ENCODE measurements at regions of chr6 and their contacts with region 1.

Region 1: DNA sequence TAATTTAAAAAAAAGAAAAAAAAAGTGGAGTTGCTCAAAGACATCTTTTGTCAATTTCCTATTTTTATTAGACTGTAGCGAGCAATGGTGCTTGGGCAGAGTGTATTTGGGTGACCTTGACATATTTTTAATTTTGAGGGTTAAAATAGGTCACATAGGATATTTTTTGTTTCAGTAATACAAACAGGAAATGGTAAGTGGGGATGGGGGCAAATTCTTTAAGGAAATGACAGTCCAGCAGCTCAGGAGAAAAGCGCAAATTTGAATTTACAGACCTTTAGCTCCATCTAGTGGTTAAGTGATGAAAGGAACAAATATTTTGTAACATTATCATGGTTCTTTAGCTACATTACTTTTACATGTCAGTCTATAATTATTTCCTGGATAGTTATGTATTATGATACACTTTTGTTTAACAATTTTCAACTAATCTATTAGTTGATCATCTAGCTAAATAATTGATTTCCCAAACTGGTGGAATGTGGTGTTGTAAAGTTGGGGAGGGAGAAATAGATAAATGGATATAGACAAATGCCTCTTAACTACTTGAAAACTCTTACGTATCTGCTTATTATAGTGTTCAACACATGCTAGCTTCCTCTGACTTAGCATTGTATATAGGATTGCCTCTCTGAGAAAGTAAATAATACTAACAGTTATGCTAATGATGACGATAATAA is 10.0 kb downstream of the CITED2 start:
- DNase-seq: peak in 2 of 9 experiments; percentile 64 to 74
- ATAC-seq: peak; percentile 63
- H3K4me3 ChIP-seq: no peak overlapping the region
- H3K4me3 Mint-ChIP-seq: no peak overlapping the region
- H3K27ac ChIP-seq: no peak overlapping the region
- H3K27ac Mint-ChIP-seq: no peak overlapping the region
- H3K4me1 ChIP-seq: peaks cover 4% of the 10 kb centered on the region
- H3K4me1 Mint-ChIP-seq: peaks cover 46% of the 10 kb centered on the region
- H3K27me3 ChIP-seq: no peaks in the 10 kb centered on the region
- H3K27me3 Mint-ChIP-seq: no peaks in the 10 kb centered on the region
- CTCF ChIP-seq: peak; percentile 97

Region 2: DNA sequence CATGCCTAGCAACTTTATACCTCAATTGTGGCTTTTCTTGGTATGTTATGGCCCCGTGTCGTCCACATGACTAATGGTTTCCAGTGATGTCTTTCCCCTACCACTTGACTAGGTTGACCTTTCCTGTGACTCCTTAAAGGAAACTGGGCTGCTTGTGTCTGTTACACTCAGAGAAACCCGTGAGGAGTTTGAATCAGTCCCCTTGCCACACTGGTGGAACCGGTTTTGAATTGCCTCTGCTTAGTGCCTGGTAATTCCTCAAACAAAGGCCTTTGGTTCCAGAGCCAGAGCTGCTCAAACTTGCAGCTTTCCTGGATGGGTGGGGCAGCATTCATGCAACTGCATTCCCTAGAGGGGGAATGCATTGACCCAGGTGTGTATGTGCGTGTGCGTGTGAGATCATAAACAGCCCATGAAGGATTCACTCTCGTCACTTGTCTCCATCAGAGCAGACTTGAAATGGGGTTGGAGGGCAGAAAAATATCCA is 546.6 kb before region 1 on chr6:
- CTCF ChIA-PET with region 1: interaction called, 19 read pairs
- POLR2A ChIA-PET with region 1: interaction called, 3 read pairs
- intact Hi-C with region 1: loop called in 1 of 2 experiments (anchors 2 kb)
- DNase-seq: no peak
- ATAC-seq: no peak
- H3K4me3 ChIP-seq: no peak overlapping the region
- H3K4me3 Mint-ChIP-seq: no peak overlapping the region
- H3K27ac ChIP-seq: no peak overlapping the region
- H3K27ac Mint-ChIP-seq: no peak overlapping the region
- H3K4me1 ChIP-seq: no peaks in the 10 kb centered on the region
- H3K4me1 Mint-ChIP-seq: no peaks in the 10 kb centered on the region
- H3K27me3 ChIP-seq: no peaks in the 10 kb centered on the region
- H3K27me3 Mint-ChIP-seq: no peaks in the 10 kb centered on the region
- CTCF ChIP-seq: no peak

Region 3: DNA sequence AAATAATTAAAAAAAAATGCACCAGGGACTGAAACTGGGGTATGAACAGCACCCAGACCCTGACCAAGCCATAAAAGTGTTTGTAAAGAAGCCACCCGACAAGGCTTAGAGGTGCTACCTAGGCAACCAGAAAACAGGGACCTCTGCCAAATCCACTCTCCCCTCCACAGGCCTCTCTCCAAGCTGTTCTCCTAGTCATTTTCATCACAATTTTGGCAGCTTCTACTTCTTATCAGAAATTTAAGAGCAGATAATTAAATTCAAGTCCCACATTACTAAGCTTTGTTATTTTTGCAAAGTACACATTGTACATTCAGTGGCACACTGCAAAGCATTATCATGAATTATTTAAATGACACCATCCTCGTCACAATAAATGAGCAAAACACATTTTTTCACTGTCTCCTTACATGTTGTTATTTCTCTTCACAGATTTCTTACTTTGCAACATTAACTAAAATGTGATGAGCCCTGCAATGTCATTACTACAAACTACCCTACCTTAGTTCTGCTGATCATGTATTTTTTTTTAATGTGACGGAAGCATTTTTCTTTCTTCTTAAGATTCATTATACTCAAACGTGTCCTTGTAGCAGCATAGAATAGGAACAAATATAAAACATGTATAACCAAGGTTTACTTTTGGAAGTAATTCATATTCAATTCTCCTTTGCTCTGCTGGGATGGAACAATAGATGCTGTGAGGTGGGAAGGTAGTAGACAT is 530.5 kb before region 1 on chr6:
- CTCF ChIA-PET with region 1: no interaction called
- POLR2A ChIA-PET with region 1: no interaction called
- intact Hi-C with region 1: no loop called
- DNase-seq: no peak
- ATAC-seq: no peak
- H3K4me3 ChIP-seq: no peak overlapping the region
- H3K4me3 Mint-ChIP-seq: no peak overlapping the region
- H3K27ac ChIP-seq: no peak overlapping the region
- H3K27ac Mint-ChIP-seq: no peak overlapping the region
- H3K4me1 ChIP-seq: no peaks in the 10 kb centered on the region
- H3K4me1 Mint-ChIP-seq: no peaks in the 10 kb centered on the region
- H3K27me3 ChIP-seq: no peaks in the 10 kb centered on the region
- H3K27me3 Mint-ChIP-seq: no peaks in the 10 kb centered on the region
- CTCF ChIP-seq: no peak

Region 4: DNA sequence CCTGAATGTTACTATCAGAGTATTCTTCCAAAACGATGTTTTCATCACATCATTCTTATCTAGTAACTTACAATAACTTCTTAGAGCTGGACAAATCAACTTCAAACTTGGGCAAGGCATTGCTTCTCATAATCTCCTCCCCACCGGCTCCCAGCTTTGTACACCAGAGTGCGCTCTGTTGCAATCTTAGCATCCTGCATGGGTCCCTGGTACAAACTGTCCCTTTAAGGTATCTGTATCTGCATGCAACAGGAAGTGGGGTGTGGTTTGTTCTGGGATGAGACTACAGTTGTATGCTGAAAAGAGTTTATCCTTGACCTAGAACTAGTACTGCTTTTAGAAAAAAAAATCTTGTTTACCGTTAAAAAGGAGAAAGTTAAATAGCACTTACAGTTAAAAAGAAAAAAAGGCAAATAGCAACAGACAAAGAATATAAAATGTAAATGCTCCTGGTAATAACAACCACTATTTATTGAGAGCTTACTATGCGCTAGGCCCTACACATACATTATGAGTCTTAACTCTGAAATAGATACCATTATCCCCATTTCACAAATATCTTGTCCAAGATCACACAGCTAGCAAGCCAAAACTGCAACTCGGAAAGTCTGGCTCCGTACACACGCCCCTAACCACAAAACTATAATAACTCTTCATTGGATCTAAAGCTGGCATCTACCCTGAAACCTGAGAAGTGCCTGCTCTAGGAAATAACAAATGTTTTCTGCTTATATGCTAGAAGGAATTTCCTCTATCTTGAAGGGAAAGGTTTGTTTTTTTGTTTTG is 239.4 kb before region 1 on chr6:
- CTCF ChIA-PET with region 1: interaction called, 27 read pairs
- POLR2A ChIA-PET with region 1: interaction called, 12 read pairs
- intact Hi-C with region 1: loop called (anchors 1 kb)
- DNase-seq: peak; percentile 55 to 93 (median 82)
- ATAC-seq: peak; percentile 95
- H3K4me3 ChIP-seq: peak overlapping the region; percentile 9 to 24
- H3K4me3 Mint-ChIP-seq: peak overlapping the region; percentile 59
- H3K27ac ChIP-seq: peak overlapping the region; percentile 42 to 71
- H3K27ac Mint-ChIP-seq: peak overlapping the region; percentile 93
- H3K4me1 ChIP-seq: peaks cover 30% of the 10 kb centered on the region
- H3K4me1 Mint-ChIP-seq: peaks cover 58% of the 10 kb centered on the region
- H3K27me3 ChIP-seq: no peaks in the 10 kb centered on the region
- H3K27me3 Mint-ChIP-seq: no peaks in the 10 kb centered on the region
- CTCF ChIP-seq: peak; percentile 86

Region 5: DNA sequence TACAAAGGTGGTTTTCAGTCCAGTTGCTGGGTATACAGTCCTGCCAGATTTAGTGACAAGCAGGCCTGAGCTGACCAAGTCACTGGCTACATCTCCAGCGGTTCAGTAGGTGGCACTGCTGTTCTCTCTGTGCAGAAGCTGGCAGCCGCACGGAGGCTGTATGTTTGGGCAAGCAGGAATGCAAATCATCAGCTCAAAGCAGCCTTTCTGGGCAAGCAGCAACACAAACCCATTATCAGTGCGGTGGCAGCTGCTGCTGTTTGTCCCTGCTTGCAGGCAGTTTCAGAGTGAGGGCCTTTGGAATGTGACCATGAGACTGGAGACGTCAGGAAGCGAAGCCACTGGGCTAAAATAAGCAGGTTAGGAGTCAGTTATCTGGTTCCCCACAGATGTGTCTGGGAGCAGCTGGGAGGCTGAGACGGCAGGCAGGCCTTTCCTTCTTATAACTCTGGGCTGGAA is 145.1 kb before region 1 on chr6:
- CTCF ChIA-PET with region 1: interaction called, 131 read pairs
- POLR2A ChIA-PET with region 1: interaction called, 14 read pairs
- intact Hi-C with region 1: loop called (anchors 1 kb)
- DNase-seq: peak; percentile 40 to 84 (median 73)
- ATAC-seq: peak; percentile 96
- H3K4me3 ChIP-seq: no peak overlapping the region
- H3K4me3 Mint-ChIP-seq: no peak overlapping the region
- H3K27ac ChIP-seq: no peak overlapping the region
- H3K27ac Mint-ChIP-seq: peak overlapping the region; percentile 82
- H3K4me1 ChIP-seq: peaks cover 11% of the 10 kb centered on the region
- H3K4me1 Mint-ChIP-seq: peaks cover 13% of the 10 kb centered on the region
- H3K27me3 ChIP-seq: no peaks in the 10 kb centered on the region
- H3K27me3 Mint-ChIP-seq: no peaks in the 10 kb centered on the region
- CTCF ChIP-seq: peak; percentile 66

Region 6: DNA sequence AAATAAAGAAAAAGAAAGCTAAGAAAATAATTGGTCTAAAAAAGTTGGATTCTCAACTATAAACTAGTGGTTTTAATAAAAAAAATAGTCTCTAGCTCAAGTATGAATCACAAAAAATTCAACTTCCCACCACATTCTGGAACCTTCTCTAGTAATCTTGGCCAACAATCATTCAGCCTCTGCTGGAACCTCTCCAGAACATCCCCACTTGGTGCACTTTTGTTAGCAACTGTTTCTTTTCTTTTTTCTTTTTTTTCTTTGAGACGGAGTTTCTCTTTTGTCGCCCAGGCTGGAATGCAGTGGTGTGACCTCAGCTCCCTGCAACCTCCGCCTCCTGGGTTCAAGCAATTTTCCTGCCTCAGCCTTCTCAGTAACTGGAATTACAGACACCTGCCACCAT is 108.4 kb before region 1 on chr6:
- CTCF ChIA-PET with region 1: interaction called, 13 read pairs
- POLR2A ChIA-PET with region 1: no interaction called
- intact Hi-C with region 1: no loop called
- DNase-seq: no peak
- ATAC-seq: no peak
- H3K4me3 ChIP-seq: no peak overlapping the region
- H3K4me3 Mint-ChIP-seq: no peak overlapping the region
- H3K27ac ChIP-seq: no peak overlapping the region
- H3K27ac Mint-ChIP-seq: no peak overlapping the region
- H3K4me1 ChIP-seq: no peaks in the 10 kb centered on the region
- H3K4me1 Mint-ChIP-seq: peaks cover 25% of the 10 kb centered on the region
- H3K27me3 ChIP-seq: no peaks in the 10 kb centered on the region
- H3K27me3 Mint-ChIP-seq: no peaks in the 10 kb centered on the region
- CTCF ChIP-seq: no peak

Region 7: GRCh38 chr6:139349464-139350020 is 14.9 kb before region 1 on chr6:
- CTCF ChIA-PET with region 1: interaction called, 14 read pairs
- POLR2A ChIA-PET with region 1: no interaction called
- intact Hi-C with region 1: no loop called
- DNase-seq: no peak
- ATAC-seq: no peak
- H3K4me3 ChIP-seq: no peak overlapping the region
- H3K4me3 Mint-ChIP-seq: no peak overlapping the region
- H3K27ac ChIP-seq: no peak overlapping the region
- H3K27ac Mint-ChIP-seq: no peak overlapping the region
- H3K4me1 ChIP-seq: peaks cover 2% of the 10 kb centered on the region
- H3K4me1 Mint-ChIP-seq: peaks cover 4% of the 10 kb centered on the region
- H3K27me3 ChIP-seq: no peaks in the 10 kb centered on the region
- H3K27me3 Mint-ChIP-seq: no peaks in the 10 kb centered on the region
- CTCF ChIP-seq: no peak

Region 8: DNA sequence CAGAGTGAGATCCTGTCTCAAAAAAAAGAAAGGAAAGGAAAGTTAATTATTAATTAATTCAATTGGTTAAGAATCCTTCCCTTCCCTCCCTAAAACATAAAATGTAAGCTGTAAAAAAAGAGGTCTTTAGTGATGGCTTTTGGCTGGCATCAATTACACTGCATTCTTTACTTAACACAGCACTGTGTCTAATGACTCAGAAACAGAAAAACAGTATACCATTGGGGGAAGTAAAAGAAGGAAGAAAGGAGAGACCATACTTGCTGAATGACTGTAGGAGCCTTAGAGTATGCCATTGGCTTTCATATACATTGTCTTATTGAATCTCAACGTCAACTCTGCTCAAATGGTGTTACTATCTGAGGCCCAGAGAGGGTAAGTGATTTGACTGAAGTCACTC is 28.4 kb after region 1 on chr6:
- CTCF ChIA-PET with region 1: no interaction called
- POLR2A ChIA-PET with region 1: no interaction called
- intact Hi-C with region 1: no loop called
- DNase-seq: no peak
- ATAC-seq: no peak
- H3K4me3 ChIP-seq: no peak overlapping the region
- H3K4me3 Mint-ChIP-seq: no peak overlapping the region
- H3K27ac ChIP-seq: no peak overlapping the region
- H3K27ac Mint-ChIP-seq: no peak overlapping the region
- H3K4me1 ChIP-seq: no peaks in the 10 kb centered on the region
- H3K4me1 Mint-ChIP-seq: no peaks in the 10 kb centered on the region
- H3K27me3 ChIP-seq: no peaks in the 10 kb centered on the region
- H3K27me3 Mint-ChIP-seq: peaks cover 2% of the 10 kb centered on the region
- CTCF ChIP-seq: no peak

Region 9: GRCh38 chr6:139508023-139508422 is 143.6 kb after region 1 on chr6:
- CTCF ChIA-PET with region 1: no interaction called
- POLR2A ChIA-PET with region 1: no interaction called
- intact Hi-C with region 1: no loop called
- DNase-seq: no peak
- ATAC-seq: no peak
- H3K4me3 ChIP-seq: no peak overlapping the region
- H3K4me3 Mint-ChIP-seq: no peak overlapping the region
- H3K27ac ChIP-seq: no peak overlapping the region
- H3K27ac Mint-ChIP-seq: no peak overlapping the region
- H3K4me1 ChIP-seq: no peaks in the 10 kb centered on the region
- H3K4me1 Mint-ChIP-seq: no peaks in the 10 kb centered on the region
- H3K27me3 ChIP-seq: no peaks in the 10 kb centered on the region
- H3K27me3 Mint-ChIP-seq: peaks cover 3% of the 10 kb centered on the region
- CTCF ChIP-seq: no peak

Region 10: DNA sequence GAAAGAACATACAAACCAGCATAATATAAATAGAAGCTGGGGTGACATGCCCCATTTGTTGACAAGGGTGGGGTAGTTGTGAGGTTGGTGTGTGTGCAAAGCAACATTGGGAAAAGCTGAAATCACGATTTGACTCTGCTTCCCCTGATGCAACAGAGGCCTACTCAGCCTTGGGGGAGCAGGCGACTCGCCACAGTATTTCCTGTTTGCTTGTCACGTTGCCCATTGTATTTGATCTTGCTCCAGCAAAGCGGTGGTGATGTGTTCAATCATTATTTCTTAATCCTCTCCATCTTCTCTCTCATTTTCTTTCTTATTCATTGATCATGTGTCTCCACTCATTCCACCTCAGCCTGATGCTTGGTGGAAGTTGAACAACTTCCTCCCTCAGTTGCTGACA is 175.8 kb after region 1 on chr6:
- CTCF ChIA-PET with region 1: no interaction called
- POLR2A ChIA-PET with region 1: no interaction called
- intact Hi-C with region 1: no loop called
- DNase-seq: peak; percentile 8 to 74 (median 48)
- ATAC-seq: peak; percentile 89
- H3K4me3 ChIP-seq: peak overlapping the region in 1 of 2 experiments; percentile 9
- H3K4me3 Mint-ChIP-seq: peak overlapping the region; percentile 32
- H3K27ac ChIP-seq: peak overlapping the region in 1 of 2 experiments; percentile 85
- H3K27ac Mint-ChIP-seq: peak overlapping the region; percentile 76
- H3K4me1 ChIP-seq: peaks cover 18% of the 10 kb centered on the region
- H3K4me1 Mint-ChIP-seq: peaks cover 33% of the 10 kb centered on the region
- H3K27me3 ChIP-seq: no peaks in the 10 kb centered on the region
- H3K27me3 Mint-ChIP-seq: no peaks in the 10 kb centered on the region
- CTCF ChIP-seq: no peak

Measured in CD8-positive, alpha-beta T cell (primary cell).